Lower lobe of right lung (tissue), 2 donors: ENCODE measurements at regions of chrX and their contacts with region 1.

Region 1: DNA sequence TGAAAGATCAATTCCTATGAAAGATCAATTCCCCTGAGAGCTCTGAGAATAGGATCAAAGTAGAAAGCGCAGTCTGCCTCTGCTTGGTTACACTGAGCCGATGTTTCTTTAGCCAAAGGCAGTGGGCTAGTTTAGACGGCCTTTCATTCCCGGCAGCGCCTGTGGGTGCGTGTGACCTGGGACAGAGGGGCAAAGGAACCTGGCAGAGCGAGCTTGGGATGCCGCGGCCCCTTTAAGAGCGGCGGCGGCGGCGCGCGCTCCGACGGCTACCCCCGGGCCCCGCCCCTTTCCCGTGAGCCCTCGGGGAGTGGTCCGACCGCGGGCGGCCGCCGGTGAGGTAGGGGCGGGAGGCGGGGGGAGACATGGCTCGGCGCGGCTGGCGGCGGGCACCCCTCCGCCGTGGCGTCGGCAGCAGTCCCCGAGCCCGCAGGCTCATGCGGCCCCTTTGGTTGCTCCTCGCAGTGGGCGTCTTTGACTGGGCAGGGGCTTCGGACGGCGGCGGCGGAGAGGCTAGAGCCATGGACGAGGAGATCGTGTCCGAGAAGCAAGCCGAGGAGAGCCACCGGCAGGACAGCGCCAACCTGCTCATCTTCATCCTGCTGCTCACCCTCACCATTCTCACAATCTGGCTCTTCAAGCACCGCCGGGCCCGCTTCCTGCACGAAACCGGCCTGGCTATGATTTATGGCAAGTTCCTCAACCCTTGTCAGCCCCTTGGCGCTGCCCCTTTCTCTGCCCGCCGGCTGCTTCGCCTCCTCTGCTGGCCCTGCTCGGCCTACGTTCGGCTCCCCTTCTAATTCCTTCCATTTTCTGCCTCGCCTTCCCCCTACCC is at the start of gene SLC9A6:
- DNase-seq: peak; percentile 82
- ATAC-seq: peak; percentile 98 to 99
- H3K4me3 ChIP-seq: peak within 1 kb of the TSS; percentile 78
- H3K27ac ChIP-seq: peak within 1 kb of the TSS; percentile 79
- H3K4me1 ChIP-seq: no peaks in the 10 kb centered on the region
- H3K27me3 ChIP-seq: no peaks in the 10 kb centered on the region
- CTCF ChIP-seq: no peak
- total RNA-seq, gene SLC9A6: 18.0 TPM

Region 2: DNA sequence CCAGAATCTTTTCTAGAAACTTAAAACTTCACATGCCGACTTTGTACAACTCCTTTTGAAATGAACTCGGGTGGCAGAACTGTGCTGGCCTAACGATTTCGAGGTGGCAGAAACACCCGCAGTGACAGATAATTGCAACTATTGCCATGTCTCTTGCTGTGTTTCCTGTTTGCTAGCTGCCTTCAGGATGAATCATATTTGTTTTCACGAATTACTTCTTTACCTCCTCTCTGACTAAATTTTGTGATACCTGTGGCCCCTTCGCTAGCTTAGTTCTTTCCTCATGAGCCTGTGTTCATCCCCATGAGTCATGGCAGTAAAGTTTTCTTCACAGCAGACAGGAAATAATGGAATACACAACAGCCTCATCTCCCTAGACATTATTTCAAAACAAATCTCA is 1099.2 kb before region 1 on chrX:
- intact Hi-C with region 1: no loop called
- DNase-seq: no peak
- ATAC-seq: no peak
- H3K4me3 ChIP-seq: no peak overlapping the region
- H3K27ac ChIP-seq: no peak overlapping the region
- H3K4me1 ChIP-seq: no peaks in the 10 kb centered on the region
- H3K27me3 ChIP-seq: no peaks in the 10 kb centered on the region
- CTCF ChIP-seq: no peak

Region 3: DNA sequence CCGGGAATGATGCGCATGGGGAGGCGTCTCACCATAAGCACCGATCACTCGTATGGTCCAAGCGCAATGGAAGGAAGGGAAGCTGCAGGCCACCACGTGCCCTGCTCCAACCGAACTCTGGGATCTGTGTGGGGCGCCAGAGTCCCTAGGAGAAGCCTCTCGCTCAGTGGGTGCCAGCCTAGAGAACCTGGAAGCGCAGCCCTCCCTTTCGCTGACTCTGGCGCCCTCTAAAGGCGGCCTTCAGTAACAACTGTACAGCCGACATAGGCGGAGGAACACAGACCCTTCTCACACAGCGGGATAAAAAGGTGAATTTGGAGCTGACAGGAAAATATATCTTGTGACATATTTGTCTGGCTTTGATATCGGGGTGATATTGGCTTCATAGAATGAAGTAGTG is 388.9 kb before region 1 on chrX:
- intact Hi-C with region 1: no loop called
- DNase-seq: peak; percentile 42
- ATAC-seq: peak in 1 of 2 donors; percentile 57
- H3K4me3 ChIP-seq: no peak overlapping the region
- H3K27ac ChIP-seq: no peak overlapping the region
- H3K4me1 ChIP-seq: no peaks in the 10 kb centered on the region
- H3K27me3 ChIP-seq: no peaks in the 10 kb centered on the region
- CTCF ChIP-seq: peak; percentile 52

Region 4: DNA sequence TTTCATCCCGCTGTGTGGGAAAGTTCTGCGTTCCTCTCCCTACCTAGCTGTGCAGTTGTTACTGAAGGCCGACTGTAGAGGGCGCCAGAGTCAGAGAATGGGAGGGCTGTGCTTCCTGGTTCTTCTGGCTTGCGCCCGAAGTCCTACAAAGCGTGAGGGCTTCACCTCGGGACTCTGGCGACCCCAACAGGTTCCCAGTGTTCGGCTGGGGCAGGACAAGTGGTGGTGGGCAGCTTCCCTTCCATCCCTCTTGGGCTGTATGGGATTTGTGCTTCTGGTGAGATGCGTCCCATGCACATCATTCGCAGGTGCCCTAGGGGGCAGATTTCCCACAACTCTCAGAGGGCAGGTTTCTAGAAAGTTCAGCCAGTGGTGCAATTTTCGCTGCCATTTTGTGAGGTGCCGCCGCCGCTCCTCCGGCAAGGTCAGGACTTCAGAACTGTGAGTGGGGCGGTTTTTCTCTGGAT is 244.6 kb before region 1 on chrX:
- intact Hi-C with region 1: no loop called
- DNase-seq: no peak
- ATAC-seq: peak in 1 of 2 donors; percentile 29
- H3K4me3 ChIP-seq: no peak overlapping the region
- H3K27ac ChIP-seq: no peak overlapping the region
- H3K4me1 ChIP-seq: no peaks in the 10 kb centered on the region
- H3K27me3 ChIP-seq: no peaks in the 10 kb centered on the region
- CTCF ChIP-seq: peak; percentile 34

Region 5: GRCh38 chrX:136106920-136107528 is 121.7 kb after region 1 on chrX:
- intact Hi-C with region 1: no loop called
- DNase-seq: no peak
- ATAC-seq: no peak
- H3K4me3 ChIP-seq: no peak overlapping the region
- H3K27ac ChIP-seq: no peak overlapping the region
- H3K4me1 ChIP-seq: no peaks in the 10 kb centered on the region
- H3K27me3 ChIP-seq: no peaks in the 10 kb centered on the region
- CTCF ChIP-seq: no peak

Region 6: DNA sequence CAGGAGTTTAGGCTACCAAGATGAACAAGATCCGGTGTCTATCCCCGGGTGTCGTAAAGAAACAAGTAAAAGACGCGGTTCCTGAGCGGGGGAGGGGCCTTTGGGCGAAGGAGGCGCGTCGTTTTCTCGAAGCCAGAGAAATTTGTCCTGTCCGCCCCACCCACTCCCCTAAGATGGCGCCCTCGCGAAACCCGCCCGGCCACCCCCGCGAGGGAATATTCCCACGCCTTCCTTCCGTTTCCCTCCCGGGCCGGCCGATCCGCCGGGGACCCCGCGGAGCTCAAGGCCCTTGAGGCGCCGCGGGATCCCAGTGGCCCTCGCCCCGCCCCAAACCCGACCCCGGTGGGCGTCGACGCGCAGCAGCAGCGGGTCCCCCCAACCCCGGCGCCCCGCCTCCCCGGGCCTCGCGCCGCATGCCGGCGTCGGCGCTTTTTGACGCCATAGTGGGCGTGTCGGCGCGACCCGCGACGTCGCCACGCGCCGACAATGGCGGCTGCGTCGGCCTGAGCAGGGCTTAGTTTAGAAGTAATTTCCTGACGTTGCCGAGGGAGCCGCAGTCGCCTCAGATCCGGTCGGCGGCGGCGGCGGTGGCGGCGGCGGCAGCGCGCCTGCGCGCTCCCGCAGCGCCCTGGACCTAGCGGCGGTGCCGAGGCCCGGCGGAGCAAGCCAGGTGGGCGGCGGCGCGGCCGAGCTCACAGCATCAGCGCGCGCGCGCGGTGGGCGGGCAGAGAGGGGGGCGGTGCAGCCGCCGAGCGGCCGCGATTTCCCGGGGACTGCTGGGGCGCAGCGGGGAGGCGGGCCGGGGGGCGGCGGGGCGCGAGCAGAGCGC is 511.6 kb after region 1 on chrX and contains the start of gene HTATSF1:
- intact Hi-C with region 1: loop called (anchors 10 kb)
- DNase-seq: peak; percentile 87
- ATAC-seq: peak; percentile 96 to 98
- H3K4me3 ChIP-seq: peak within 1 kb of the TSS; percentile 68
- H3K27ac ChIP-seq: peak within 1 kb of the TSS; percentile 90
- H3K4me1 ChIP-seq: no peaks in the 10 kb centered on the region
- H3K27me3 ChIP-seq: no peaks in the 10 kb centered on the region
- CTCF ChIP-seq: no peak
- total RNA-seq, gene HTATSF1: 27.4 TPM